Activated T-helper 1 cell treated with anti-CD3 and anti-CD28 coated beads, Interleukin-12 subunit alpha, Interleukin-12 subunit beta, Interleukin-2, Interleukin-4 antibody, amounts not matched to agents 30 ng/mL and 10 ng/mL and 1 ng/mL, durations not matched to agents 14 hours and 24 hours and 36 hours (primary cell): ENCODE measurements at regions of chr6 and their contacts with region 1.

Region 1: GRCh38 chr6:97068211-97068610 is 143.7 kb downstream of the KLHL32 start:
- DNase-seq: no peak
- H3K4me3 Mint-ChIP-seq: no peak overlapping the region
- H3K27ac Mint-ChIP-seq: no peak overlapping the region
- H3K4me1 Mint-ChIP-seq: peaks cover 9% of the 10 kb centered on the region
- H3K27me3 Mint-ChIP-seq: peaks cover 1% of the 10 kb centered on the region

Region 2: GRCh38 chr6:96286503-96286902 is 781.7 kb before region 1 on chr6:
- intact Hi-C with region 1: no loop called
- DNase-seq: no peak
- H3K4me3 Mint-ChIP-seq: no peak overlapping the region
- H3K27ac Mint-ChIP-seq: no peak overlapping the region
- H3K4me1 Mint-ChIP-seq: no peaks in the 10 kb centered on the region
- H3K27me3 Mint-ChIP-seq: no peaks in the 10 kb centered on the region

Region 3: GRCh38 chr6:96509281-96509680 is 558.9 kb before region 1 on chr6:
- intact Hi-C with region 1: no loop called
- DNase-seq: no peak
- H3K4me3 Mint-ChIP-seq: no peak overlapping the region
- H3K27ac Mint-ChIP-seq: no peak overlapping the region
- H3K4me1 Mint-ChIP-seq: no peaks in the 10 kb centered on the region
- H3K27me3 Mint-ChIP-seq: no peaks in the 10 kb centered on the region

Region 4: DNA sequence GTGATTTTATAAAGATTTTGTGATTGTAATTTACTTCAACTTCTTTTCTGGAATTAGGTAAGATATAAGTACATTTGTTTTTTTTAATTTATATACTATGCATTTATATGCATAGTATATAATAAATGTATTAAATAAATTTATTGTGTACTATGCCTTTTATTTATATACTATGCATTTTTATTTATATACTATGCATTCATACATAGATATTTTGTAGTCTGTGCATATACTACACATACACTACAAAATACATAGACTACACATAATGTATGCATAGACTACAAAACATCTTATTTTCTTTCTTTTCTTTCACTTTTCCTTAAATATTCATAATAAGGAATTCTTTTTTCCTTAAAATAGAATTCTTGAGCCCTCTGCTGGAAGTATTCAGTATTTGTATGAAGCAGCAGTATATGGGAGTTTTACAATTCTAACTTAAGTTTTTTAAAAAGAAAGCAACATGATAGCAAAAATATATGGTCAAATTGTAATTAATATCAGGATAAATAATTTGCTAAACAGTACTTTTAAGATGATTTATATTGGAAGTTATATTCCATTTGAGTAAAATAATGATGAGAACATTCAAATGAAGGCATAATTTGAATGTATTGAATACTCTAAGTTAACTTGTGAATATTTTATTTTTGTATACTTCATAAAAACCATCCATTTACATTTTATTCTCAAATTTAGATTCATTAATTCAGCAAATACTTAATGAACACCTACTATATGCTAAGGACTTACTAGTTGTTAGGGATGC is 14.4 kb before region 1 on chr6:
- intact Hi-C with region 1: no loop called
- DNase-seq: no peak
- H3K4me3 Mint-ChIP-seq: no peak overlapping the region
- H3K27ac Mint-ChIP-seq: no peak overlapping the region
- H3K4me1 Mint-ChIP-seq: peaks cover 14% of the 10 kb centered on the region
- H3K27me3 Mint-ChIP-seq: peaks cover 4% of the 10 kb centered on the region

Region 5: GRCh38 chr6:97186416-97186999 is 118.3 kb after region 1 on chr6:
- intact Hi-C with region 1: loop called (anchors 1 kb)
- DNase-seq: peak; percentile 29
- H3K4me3 Mint-ChIP-seq: no peak overlapping the region
- H3K27ac Mint-ChIP-seq: no peak overlapping the region
- H3K4me1 Mint-ChIP-seq: no peaks in the 10 kb centered on the region
- H3K27me3 Mint-ChIP-seq: no peaks in the 10 kb centered on the region

Region 6: GRCh38 chr6:97262676-97263075 is 194.5 kb after region 1 on chr6:
- intact Hi-C with region 1: no loop called
- DNase-seq: no peak
- H3K4me3 Mint-ChIP-seq: no peak overlapping the region
- H3K27ac Mint-ChIP-seq: no peak overlapping the region
- H3K4me1 Mint-ChIP-seq: no peaks in the 10 kb centered on the region
- H3K27me3 Mint-ChIP-seq: no peaks in the 10 kb centered on the region